Ovary (tissue), 10 donors: ENCODE measurements at regions of chr22 and their contacts with region 1.

Region 1: GRCh38 chr22:16834971-16835370 is 9.8 kb upstream of the XKR3 start:
- DNase-seq: no peak
- H3K4me3 ChIP-seq: no peak overlapping the region
- H3K27ac ChIP-seq: no peak overlapping the region
- H3K4me1 ChIP-seq: no peaks in the 10 kb centered on the region
- H3K27me3 ChIP-seq: no peaks in the 10 kb centered on the region
- CTCF ChIP-seq: no peak
- EP300 ChIP-seq: no peak
- POLR2A ChIP-seq: no peak

Region 2: DNA sequence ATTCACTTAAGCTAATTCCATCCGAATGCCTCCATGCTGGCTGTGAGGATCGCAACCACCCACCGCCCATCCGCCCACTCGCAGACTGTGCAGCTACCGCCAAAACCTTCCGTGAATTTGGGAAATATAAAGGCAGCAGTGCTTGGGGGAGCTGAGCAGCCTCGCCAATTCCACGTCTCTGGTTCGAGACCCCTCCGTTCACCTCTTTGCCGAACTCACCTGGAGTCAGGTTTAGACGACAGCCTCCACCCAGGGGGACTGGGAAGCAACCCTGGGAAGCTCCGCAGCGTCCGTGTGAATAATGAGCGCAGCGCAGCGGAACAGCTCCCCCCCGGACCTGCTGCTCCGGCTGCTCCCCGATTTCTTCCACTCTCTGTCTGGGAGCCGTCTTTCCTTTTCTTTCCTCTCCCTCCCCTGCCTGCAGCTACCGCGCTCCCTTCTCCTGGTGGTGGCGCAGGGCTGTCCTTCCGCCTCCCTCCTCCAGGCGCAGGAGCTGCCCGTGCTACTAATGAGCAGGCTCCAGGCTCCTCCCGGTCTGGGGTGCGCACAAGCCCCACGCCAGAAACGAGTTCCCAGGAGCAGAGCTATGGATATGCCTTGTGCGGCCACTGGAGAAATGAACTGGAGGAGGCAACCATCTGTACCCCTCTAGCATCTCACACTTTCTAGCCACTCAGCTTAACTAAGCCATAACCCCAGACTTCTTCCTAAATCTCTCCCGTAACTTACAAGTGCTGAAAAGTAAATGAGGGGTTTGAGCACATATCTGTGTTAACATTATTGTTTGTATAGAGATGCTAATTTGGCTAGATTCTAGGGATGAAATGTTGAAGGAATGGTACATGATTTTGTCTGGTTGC is 117.0 kb before region 1 on chr22:
- intact Hi-C with region 1: no loop called
- DNase-seq: no peak
- H3K4me3 ChIP-seq: no peak overlapping the region
- H3K27ac ChIP-seq: no peak overlapping the region
- H3K4me1 ChIP-seq: no peaks in the 10 kb centered on the region
- H3K27me3 ChIP-seq: no peaks in the 10 kb centered on the region
- CTCF ChIP-seq: no peak
- EP300 ChIP-seq: no peak
- POLR2A ChIP-seq: no peak

Region 3: GRCh38 chr22:16783930-16784354 is 51.0 kb before region 1 on chr22:
- intact Hi-C with region 1: no loop called
- DNase-seq: no peak
- H3K4me3 ChIP-seq: no peak overlapping the region
- H3K27ac ChIP-seq: no peak overlapping the region
- H3K4me1 ChIP-seq: no peaks in the 10 kb centered on the region
- H3K27me3 ChIP-seq: no peaks in the 10 kb centered on the region
- CTCF ChIP-seq: no peak
- EP300 ChIP-seq: no peak
- POLR2A ChIP-seq: no peak

Region 4: GRCh38 chr22:16955678-16956210 is 120.8 kb after region 1 on chr22:
- intact Hi-C with region 1: no loop called
- DNase-seq: no peak
- H3K4me3 ChIP-seq: no peak overlapping the region
- H3K27ac ChIP-seq: no peak overlapping the region
- H3K4me1 ChIP-seq: no peaks in the 10 kb centered on the region
- H3K27me3 ChIP-seq: no peaks in the 10 kb centered on the region
- CTCF ChIP-seq: no peak
- EP300 ChIP-seq: no peak
- POLR2A ChIP-seq: no peak

Region 5: DNA sequence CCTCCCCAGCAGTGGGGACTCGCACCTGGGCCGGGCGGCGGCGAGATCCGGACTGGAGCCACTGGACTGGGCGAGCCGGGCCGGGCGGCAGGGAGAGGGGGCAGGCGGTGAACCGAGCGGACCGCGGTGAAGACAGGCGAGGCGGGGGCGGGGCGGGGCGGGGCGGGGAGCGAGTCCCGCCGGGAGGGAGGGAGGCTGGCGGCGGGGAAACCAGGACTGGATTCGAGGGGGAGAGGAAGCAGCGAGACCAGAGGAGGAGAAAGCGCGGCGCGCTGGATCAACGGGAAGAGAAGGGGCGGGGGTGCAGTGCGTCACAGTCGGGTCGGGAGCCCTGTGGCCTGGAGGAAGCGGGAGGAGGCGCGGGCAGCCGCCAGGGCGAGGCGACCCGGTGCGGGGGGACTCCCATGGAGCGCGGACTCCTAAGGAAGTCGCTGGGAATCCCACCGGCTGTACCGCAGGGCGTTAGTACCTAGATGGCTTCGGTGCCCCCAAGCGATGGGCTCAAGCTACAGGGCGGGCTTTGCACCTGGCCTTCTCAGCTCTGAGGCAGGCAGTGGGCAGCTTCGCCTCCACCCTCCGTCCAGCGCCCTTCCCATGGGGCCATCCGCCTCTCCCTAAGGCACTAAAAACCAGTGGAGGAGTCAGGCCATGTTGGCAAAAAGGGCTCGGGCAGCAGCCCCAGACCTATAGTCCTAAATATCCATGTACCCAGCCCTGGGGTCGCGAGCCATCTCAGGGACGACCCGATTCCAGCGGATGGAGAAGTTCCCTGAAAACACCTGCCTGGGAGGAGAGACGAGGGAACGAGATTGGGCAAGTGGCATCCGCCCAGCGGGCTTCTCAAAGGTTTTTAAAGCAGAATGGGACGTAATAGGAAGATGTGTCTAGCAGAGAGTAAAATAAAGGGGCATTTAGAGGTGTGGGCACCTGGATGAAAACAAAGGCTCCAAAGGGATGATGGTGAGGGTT is 286.5 kb after region 1 on chr22 and contains the start of gene TMEM121B:
- intact Hi-C with region 1: loop called in 1 of 4 experiments (anchors 5 kb)
- DNase-seq: peak; percentile 21 to 53 (median 31)
- H3K4me3 ChIP-seq: peak within 1 kb of the TSS; percentile 38
- H3K27ac ChIP-seq: no peak within 1 kb of the TSS
- H3K4me1 ChIP-seq: peaks cover 7% of the 10 kb centered on the region
- H3K27me3 ChIP-seq: peaks cover 5% of the 10 kb centered on the region
- CTCF ChIP-seq: no peak
- EP300 ChIP-seq: no peak
- POLR2A ChIP-seq: no peak
- total RNA-seq, gene TMEM121B: 0.12 to 1.1 (median 0.53) TPM